Lower lobe of right lung (tissue), 2 donors: ENCODE measurements at regions of chr1 and their contacts with region 1.

Region 1: DNA sequence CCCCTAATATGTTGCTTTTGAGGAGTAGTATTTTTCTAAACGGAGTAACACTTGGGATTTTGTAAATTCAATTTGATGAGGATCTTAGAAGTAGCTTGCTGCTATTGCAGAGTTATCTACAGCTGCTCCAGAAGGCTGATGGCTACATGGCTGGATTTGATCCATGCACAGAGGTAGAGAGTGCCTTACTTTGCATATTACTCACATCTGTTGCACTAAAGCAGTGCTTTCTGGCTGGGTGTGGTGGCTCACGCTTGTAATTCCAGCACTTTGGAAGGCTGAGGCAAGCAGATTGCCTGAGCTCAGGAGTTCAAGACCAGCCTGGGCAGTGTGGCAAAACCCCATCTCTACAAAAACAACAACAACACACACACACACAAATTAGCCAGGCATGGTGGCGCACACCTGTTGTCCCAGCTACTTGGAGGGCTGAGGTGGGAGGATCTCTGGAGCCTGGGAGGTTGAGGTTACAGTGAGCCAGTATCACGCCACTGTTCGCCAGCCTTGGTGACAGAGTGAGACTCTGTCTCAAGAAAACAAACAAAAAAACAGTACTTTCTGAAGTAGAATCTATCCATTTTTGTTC is 24.6 kb downstream of the RALGPS2 start:
- DNase-seq: no peak
- ATAC-seq: no peak
- H3K4me3 ChIP-seq: no peak overlapping the region
- H3K27ac ChIP-seq: no peak overlapping the region
- H3K4me1 ChIP-seq: no peaks in the 10 kb centered on the region
- H3K27me3 ChIP-seq: no peaks in the 10 kb centered on the region
- CTCF ChIP-seq: no peak

Region 2: DNA sequence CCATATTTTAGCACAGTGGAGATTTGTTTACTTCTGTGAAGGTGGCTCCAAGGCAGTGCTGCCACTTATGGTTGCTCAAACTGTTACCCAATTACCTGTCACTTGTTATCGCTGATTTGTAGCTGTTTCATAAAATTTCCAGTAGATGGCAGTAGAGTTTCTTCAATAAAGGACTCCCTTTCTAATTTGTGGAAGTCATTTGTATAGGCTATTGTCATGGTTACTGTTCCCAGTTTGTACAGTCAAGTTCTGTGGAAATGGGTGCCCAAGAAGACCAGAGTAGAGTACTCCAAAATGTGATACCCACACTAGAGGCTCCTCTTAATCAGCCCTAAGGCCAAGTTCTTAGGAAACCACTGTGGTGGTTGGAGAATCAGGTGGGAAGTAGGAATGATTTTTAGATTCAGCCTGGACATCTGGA is 439.0 kb before region 1 on chr1:
- intact Hi-C with region 1: no loop called
- DNase-seq: no peak
- ATAC-seq: peak; percentile 94 to 97
- H3K4me3 ChIP-seq: no peak overlapping the region
- H3K27ac ChIP-seq: no peak overlapping the region
- H3K4me1 ChIP-seq: peaks cover 8% of the 10 kb centered on the region
- H3K27me3 ChIP-seq: no peaks in the 10 kb centered on the region
- CTCF ChIP-seq: peak; percentile 75

Region 3: DNA sequence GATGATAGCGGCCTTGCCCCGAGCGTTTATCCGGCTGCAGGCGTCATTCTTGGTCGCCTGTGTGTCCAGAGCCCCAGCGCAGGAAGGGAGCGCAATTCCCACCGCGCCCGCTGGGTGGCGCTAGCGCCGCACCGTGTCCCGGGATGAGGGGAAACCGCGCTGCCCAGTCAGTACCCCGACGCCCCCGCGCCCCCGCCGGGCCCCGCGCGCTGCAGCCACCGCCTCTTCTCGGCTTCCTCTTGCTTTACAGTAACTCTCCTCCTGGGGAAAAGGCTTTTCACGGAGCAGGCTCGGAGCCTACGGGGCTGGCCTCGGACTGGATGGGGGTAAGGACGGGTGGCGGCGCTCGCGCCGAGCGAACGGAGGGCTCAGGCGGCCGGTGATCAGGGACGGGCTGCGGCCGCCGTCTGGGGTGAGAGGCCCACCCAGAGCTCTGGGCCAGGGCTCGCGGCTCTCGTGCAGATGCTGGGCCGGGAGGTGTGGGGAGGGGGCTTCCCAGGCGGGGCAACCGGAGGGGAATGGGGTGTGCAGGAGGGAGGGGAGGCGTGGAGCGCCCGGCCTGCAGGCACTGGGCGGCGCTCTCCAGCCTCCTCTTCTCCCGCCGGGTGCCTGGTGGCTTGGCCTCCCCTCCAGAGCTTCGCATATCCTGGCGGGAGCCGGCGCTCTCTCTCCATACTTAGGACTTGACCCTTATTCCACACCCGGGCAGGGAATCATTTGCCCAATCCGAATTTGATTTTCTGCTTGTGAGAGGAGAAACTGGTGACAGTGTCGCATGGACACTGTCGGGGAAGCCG is 206.9 kb before region 1 on chr1:
- intact Hi-C with region 1: loop called (anchors 5 kb)
- DNase-seq: peak; percentile 90
- ATAC-seq: peak; percentile 97 to 98
- H3K4me3 ChIP-seq: peak overlapping the region; percentile 86
- H3K27ac ChIP-seq: peak overlapping the region; percentile 75
- H3K4me1 ChIP-seq: peaks cover 7% of the 10 kb centered on the region
- H3K27me3 ChIP-seq: no peaks in the 10 kb centered on the region
- CTCF ChIP-seq: peak; percentile 98

Region 4: GRCh38 chr1:178607718-178608408 is 141.8 kb before region 1 on chr1:
- intact Hi-C with region 1: no loop called
- DNase-seq: no peak
- ATAC-seq: peak in 1 of 2 donors; percentile 32
- H3K4me3 ChIP-seq: no peak overlapping the region
- H3K27ac ChIP-seq: no peak overlapping the region
- H3K4me1 ChIP-seq: peaks cover 10% of the 10 kb centered on the region
- H3K27me3 ChIP-seq: no peaks in the 10 kb centered on the region
- CTCF ChIP-seq: no peak